ENCODE measurements at regions of chr4 and their contacts with region 1.

Region 1: GRCh38 chr4:46844325-46844917 is 64.6 kb downstream of the COX7B2 start:
- DNase-seq: peak in 1 of 2 experiments; percentile 15
- H3K4me3 ChIP-seq: no peak overlapping the region
- H3K27ac ChIP-seq: no peak overlapping the region
- H3K4me1 ChIP-seq: no peaks in the 10 kb centered on the region
- H3K27me3 ChIP-seq: no peaks in the 10 kb centered on the region
- CTCF ChIP-seq: peak; percentile 85

Region 2: GRCh38 chr4:47032415-47033106 is 188.1 kb after region 1 on chr4:
- CTCF ChIA-PET with region 1: no interaction called
- POLR2A ChIA-PET with region 1: no interaction called
- intact Hi-C with region 1: loop called (anchors 1 kb)
- DNase-seq: peak in 1 of 2 experiments; percentile 38
- H3K4me3 ChIP-seq: peak overlapping the region; percentile 54
- H3K27ac ChIP-seq: no peak overlapping the region
- H3K4me1 ChIP-seq: no peaks in the 10 kb centered on the region
- H3K27me3 ChIP-seq: no peaks in the 10 kb centered on the region
- CTCF ChIP-seq: peak; percentile 66

Region 3: DNA sequence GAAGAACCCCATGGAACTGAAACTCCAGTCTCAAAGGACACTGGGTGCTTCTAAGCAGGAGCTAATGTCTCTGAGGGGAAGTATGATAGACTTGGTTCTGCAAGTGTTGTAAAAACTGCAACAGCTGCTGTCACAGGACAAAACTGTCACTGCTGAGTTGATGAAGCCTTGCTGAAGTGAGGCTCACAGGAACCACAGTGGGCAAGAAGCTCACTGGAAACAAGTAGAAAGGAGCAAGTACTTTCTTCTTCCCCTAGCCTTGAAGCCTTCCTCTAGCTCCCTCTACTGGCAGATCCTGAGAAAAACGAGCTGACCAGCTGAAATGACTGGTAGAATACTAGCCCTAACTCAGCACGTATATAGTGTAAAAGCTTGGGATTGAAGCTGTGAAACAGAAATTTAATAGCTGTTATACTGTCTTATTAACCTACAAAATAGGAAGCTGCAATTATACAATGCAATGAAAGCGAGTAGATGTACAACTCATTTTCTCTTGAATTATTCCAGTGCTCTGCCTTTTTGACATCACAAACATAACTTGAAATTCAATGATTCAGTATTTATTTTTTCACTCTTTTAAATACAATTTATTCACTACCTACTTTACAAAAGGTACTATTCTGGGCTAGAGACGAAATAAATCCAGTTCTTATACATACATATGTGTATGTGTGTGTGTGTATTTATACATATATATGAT is 278.3 kb after region 1 on chr4:
- CTCF ChIA-PET with region 1: no interaction called
- POLR2A ChIA-PET with region 1: no interaction called
- intact Hi-C with region 1: loop called (anchors 2 kb)
- DNase-seq: peak; percentile 36 to 38
- H3K4me3 ChIP-seq: no peak overlapping the region
- H3K27ac ChIP-seq: no peak overlapping the region
- H3K4me1 ChIP-seq: no peaks in the 10 kb centered on the region
- H3K27me3 ChIP-seq: no peaks in the 10 kb centered on the region
- CTCF ChIP-seq: peak; percentile 83